Lower leg skin (tissue), 4 donors: ENCODE measurements at regions of chr5 and their contacts with region 1.

Region 1: DNA sequence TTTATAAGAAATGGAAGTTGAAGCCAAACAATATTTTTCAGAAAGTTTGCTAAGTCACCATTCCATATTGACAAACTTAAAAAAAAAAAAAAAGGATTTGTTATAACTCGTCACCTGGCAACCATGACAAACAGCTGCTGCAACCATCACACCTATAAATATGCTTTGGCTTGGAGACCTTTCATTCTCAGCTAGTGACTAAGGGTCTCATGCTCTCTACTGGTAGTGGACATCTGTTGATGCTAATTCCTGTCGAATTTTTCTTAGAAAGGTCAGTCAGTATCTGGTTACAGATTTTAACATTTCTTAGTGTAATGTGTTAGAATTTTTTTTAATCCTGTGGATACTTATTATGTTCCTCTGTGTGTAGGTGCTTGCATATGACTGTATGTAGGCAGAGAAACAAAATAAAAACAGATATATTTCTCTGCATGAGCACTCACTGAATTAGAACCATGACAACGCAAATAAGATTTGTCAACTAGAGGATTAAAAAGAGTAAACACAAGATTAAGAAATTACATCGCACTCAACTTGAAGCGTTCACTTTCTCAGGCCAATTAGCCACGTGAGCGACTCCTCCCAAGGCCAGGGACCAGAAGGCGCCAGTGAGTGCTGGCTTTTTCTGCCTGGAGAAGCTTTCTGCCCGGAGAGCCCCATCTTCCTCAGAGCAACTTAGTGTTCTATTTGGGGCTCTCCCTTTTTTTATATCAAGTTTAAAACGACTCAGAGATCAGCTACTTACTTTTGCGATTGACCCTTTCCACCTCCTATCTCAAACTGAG is 27.0 kb upstream of the ZNF622 start:
- DNase-seq: peak; percentile 86 to 93
- H3K4me3 ChIP-seq: no peak overlapping the region
- CTCF ChIP-seq: no peak
- POLR2A ChIP-seq: no peak

Region 2: DNA sequence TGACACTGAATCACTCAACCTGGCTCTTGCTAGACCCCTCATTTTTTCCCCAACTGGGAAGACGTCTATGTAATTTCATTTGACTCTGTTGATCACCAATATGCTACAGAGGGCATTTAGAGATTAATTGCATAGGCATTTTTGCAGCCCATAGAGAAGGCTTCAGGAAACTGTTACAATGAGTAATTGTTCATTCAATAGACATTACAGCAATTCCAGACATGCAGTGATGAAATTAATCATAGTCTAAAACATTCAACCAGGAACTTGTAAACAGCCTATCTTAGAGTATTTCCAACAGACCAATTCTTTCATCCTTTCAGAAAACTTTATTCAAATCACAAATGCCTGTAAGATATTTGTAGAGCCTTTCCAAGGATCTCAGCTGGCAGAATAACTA is 435.3 kb before region 1 on chr5:
- intact Hi-C with region 1: no loop called
- DNase-seq: no peak
- H3K4me3 ChIP-seq: no peak overlapping the region
- CTCF ChIP-seq: no peak
- POLR2A ChIP-seq: no peak

Region 3: DNA sequence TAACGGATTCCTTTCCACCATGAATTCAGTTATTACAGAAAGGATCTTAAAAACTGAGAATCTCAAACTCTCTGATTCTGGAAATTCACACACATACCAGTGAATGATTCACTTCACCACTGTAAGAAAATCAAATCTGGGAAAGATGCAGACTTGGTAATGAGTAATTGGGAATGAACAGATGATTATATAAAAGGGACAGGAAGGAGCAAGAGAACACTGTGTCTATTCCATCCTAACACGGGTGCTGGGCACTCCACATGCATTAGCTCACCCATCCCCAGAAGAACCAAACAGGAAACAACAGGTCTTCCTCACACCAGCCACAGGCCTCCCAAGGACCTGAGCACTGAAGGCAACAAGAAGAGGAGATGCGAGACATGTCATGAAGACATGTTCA is 47.8 kb after region 1 on chr5:
- intact Hi-C with region 1: loop called (anchors 10 kb)
- DNase-seq: peak in 1 of 2 donors; percentile 84
- H3K4me3 ChIP-seq: no peak overlapping the region
- CTCF ChIP-seq: no peak
- POLR2A ChIP-seq: no peak